ENCODE measurements at regions of chr2 and their contacts with region 1.

Region 1: GRCh38 chr2:191544461-191545062 is 133.4 kb upstream of the NABP1 start:
- DNase-seq: no peak
- ATAC-seq: no peak
- H3K4me3 ChIP-seq: no peak overlapping the region
- H3K27ac ChIP-seq: no peak overlapping the region
- H3K4me1 ChIP-seq: no peaks in the 10 kb centered on the region
- H3K27me3 ChIP-seq: no peaks in the 10 kb centered on the region
- CTCF ChIP-seq: no peak

Region 2: GRCh38 chr2:190149908-190150307 is 1394.7 kb before region 1 on chr2:
- intact Hi-C with region 1: loop called in 1 of 2 experiments (anchors 10 kb)
- DNase-seq: no peak
- ATAC-seq: no peak
- H3K4me3 ChIP-seq: no peak overlapping the region
- H3K27ac ChIP-seq: no peak overlapping the region
- H3K4me1 ChIP-seq: no peaks in the 10 kb centered on the region
- H3K27me3 ChIP-seq: no peaks in the 10 kb centered on the region
- CTCF ChIP-seq: no peak